ENCODE measurements at regions of chr13 and their contacts with region 1.

Region 1: DNA sequence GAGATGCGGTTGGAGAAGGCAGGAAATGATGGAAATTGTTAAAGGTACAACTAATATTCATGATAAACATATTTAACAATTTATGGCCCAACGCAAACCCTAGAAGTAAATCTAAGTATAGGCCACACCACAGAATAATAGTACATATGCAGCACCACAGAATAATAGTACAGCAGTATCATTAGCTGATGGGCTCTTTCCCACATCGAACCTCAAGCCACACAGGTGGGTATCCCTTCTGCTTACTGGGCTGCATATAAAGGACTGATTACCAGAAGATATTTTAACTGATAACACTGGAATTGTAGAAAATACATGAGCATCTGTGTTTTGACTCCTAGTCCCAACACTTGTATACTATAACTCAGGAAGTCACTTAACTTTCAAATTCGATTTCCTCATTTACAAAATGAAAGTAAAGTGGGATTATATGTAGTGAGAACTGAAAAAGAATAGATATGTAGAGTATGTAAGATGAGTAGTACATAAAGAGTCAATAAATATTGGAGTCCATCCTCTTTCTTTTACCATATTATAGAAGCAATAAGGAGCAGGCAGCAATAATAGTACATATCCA is 91.5 kb downstream of the TSC22D1 start:
- DNase-seq: no peak
- ATAC-seq: no peak

Region 2: GRCh38 chr13:44879463-44880058 is 394.9 kb after region 1 on chr13:
- intact Hi-C with region 1: loop called (anchors 10 kb)
- DNase-seq: no peak
- ATAC-seq: peak; percentile 54

Region 3: DNA sequence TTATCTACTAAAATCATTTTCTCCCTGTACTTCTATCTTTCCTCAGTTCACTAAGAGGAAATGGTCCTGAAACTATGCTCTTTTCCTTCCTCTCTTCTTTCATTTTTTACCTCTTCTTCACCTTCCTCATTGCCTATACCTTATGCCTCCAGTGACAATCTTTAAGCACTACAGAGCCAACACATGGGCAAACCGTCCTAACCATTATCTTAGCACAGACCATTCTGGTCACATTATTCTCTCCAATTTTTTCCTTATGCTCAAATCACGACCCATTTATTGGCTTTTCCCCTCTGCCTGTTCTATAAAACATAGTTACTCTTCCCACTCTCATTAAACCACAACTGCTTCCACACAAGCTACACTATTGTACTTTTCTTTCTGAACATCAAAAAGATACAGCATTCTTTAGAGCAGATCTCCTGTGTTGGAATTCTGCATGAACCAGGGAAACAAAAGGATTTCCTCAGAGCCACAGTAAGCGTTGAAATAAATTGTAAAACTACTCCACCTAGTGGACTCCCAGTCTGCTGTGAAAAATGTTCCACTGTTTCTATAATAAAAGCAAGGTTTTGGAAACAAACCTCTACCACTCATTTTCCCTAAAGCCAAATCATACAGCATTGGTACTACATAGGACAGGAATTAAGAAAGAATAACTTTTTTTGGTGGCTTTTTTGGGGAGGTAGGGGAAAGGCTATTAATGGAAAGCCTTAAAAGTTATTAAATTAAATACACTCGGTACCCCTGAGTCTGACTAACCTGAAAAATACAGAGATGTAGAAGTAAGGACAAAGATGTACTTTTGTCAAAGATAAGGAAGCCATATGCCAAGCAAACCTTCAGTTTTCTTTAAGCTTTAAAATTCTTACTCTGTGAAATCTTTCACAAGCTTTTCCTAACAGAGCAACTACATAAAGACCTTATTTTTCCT is 485.2 kb after region 1 on chr13:
- intact Hi-C with region 1: loop called (anchors 2 kb)
- DNase-seq: no peak
- ATAC-seq: peak; percentile 70

Region 4: DNA sequence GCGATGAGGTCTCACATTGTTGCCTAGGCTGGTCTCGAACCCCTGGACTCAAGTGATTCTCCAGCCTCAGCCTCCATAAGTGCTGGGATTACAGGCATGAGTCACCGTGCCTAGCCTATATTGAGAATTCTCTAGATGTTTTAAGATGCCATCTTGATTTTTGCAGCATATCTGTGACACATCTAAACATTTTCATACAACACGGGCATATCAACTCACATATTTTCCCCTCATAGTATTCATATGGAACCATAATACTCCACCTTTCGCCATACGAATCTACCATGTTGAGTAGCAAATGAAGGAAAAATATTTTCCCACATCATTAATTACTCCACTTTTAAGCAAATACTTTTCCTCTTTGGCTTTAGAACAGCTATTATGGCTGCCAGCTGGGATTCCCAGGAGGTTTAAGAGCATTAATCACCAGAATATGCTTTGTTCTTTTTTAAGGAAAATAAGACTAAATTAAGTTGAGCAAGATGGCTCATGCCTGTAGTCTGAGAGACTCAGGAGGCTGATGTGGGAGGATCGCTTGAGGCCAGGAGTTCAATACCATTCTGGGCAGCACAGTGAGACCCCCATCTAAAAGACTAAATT is 578.7 kb after region 1 on chr13:
- intact Hi-C with region 1: no loop called
- DNase-seq: no peak
- ATAC-seq: no peak

Measured in left ventricle myocardium superior (tissue), 1 donor.